Cardiac septum (tissue), 1 donor: ENCODE measurements at regions of chr4 and their contacts with region 1.

Region 1: DNA sequence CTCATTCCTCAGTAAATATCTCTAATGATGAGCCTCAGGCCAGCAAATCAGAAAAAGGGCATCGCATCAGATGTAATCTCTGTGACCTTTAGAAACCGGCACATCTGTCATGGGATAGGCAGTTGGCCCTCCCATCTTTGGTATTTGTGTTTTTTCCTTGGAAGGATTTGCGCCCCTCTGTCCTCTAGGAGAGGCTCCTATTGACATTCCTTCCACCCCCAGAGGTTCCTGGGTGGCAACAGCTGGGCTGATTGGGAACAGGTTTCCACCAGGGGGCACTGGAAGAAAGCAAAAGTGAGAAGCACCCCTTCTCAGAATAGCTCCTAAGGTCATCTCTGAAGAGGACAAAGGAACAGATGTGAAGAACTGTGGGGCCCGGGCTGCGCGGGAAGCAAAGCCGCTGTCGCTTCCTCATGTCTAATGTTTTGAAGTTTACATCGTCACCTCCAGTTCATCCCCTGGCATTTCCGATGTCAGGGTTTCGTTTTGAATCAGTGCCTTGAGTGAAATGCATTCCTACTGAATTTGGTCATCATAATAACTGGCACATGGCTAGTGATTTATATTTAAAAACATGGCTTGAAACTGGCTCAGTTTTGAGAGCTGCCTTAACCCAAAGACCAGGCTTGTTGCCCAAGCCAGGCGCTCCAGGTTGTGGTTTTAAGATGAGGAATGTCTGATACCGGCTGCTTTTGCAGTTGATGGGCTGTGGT is 6.2 kb downstream of the TXK start:
- DNase-seq: peak; percentile 79

Region 2: DNA sequence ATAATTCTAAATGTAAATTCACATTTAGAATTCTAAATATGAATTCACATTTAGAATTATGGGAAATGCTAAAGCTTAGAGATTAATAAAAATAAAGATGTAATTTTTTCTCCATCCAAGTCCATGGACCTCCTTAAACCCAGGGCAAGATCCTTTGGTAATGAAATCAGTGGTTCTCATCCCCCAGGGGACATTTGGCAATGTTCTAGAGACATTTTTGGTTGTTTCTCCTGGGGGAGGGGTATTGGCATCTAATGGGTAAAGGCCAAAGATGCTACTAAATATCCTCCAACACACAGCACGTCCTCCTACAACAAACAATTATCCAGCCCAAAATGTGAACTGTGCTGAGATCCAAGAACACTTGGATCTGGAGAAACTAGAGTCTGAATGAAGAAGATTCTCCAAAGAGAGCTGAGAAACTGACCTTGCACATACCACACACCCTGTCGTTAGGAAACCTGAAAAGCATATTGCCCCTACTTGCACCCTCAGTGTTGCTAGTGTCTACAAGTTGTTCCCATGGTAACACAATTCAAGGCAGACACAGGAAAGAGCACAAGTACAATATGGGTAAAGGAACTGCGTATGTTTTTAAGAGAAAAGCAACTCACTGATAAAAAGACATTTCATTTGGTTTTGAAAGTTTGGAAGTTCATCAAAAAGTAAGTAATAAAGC is 69.4 kb before region 1 on chr4:
- intact Hi-C with region 1: no loop called
- DNase-seq: no peak

Region 3: DNA sequence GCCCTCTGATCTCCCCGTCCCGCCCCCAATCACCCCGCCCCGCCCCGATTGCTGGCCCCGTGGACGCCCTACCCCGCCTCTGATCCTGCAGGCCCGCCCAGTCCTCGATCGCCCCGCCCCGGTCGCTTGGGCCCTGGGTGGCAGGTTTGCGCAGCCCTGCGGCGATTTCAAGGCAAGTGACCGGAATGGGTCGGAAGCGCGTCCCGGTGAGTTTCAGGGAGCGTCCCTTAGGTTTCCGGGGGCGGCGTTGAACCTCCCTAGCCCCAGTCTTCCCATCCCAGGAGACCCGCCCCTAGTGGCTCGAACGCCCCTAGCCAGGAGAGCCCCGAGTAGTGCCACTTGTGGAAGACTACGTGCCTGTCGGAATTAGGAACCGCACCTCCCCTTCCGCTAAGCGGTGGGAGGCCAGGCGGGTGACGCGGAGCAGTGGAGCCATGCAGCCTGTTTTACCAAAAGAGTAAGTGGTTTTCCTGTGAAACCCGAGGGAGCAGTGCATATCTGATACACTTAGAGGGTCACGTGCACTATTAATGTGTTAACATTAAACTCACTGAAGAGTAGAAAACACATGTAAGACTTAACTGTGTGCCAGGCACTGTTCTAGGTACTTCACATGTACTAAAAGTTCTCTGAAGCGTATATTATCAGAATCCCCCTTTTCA is 142.2 kb after region 1 on chr4:
- intact Hi-C with region 1: loop called (anchors 2 kb)
- DNase-seq: peak; percentile 99